Activated naive CD4-positive, alpha-beta T cell treated with anti-CD3 and anti-CD28 coated beads for 36 hours (primary cell): ENCODE measurements at regions of chrX and their contacts with region 1.

Region 1: GRCh38 chrX:39427906-39428305 is 626.6 kb downstream of the MID1IP1 start:
- DNase-seq: peak; percentile 71
- H3K4me3 Mint-ChIP-seq: no peak overlapping the region
- H3K27ac Mint-ChIP-seq: peak overlapping the region; percentile 88
- H3K4me1 Mint-ChIP-seq: peaks cover 67% of the 10 kb centered on the region
- H3K27me3 Mint-ChIP-seq: no peaks in the 10 kb centered on the region

Region 2: DNA sequence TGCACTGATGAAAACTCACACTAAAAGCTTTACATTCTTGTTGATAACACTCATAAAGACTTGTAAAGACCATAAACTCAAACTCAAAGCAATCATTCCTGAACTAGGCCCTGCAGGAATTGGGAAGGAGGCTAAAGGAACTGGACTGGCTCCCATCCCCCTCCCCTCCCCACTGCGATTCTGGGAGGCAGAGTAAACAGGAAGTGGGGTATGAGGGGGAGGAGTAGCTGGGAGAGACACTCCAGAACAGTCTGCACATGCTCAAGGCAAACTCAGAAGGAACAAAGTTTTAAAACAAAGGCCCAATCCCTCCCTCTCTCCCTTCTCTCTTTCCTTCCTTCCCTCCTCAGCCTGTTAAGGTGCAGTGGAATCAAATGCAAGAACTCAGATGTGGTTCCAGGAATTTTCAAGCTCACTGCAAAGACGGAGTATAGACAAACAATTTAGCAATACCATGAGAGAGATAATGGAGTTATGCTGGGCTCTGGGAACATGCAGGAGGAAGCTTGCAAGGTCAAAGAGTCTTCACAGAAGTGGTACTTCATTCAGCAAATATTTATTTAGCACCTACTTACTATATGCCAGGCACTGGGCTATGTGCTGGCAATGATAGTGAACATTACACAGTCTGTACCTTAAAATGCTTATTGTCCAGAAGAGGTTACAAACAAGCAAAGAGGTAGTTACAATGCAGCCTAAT is 610.8 kb before region 1 on chrX:
- CTCF ChIA-PET with region 1: no interaction called
- intact Hi-C with region 1: loop called (anchors 5 kb)
- DNase-seq: no peak
- H3K4me3 Mint-ChIP-seq: no peak overlapping the region
- H3K27ac Mint-ChIP-seq: no peak overlapping the region
- H3K4me1 Mint-ChIP-seq: peaks cover 7% of the 10 kb centered on the region
- H3K27me3 Mint-ChIP-seq: no peaks in the 10 kb centered on the region

Region 3: DNA sequence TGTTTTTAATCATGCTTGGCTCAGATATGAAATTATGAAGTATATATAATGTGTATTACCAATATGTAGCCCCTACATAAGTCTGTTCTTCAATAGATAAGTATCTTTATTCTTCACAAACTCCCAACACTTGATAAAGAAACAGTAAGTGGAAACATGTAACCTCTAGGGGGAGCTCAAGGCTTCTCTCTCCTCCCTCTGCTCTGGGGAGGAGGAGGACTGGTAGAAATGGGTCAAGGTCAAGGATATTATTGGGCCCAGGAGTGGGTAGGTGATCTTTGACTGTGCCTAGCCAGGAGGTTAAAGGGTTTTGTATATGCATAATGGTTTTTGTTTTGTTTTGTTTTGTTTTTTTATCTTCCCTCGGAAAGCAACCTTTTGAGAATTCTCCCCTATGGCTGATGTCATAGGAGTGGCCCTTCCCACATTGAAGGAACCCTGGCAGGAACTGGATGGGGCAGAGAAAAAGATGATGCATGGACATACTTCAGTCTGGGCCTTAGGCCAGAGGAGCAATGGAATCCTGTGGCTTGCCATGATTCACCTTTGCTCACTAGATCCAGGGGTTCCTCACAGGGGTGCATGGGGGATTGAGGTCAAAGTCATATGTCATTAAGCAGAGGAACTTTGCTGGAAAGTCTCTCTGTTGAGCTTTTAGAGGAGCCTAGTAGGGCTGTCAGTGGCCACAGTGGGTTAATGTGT is 166.3 kb before region 1 on chrX:
- CTCF ChIA-PET with region 1: no interaction called
- intact Hi-C with region 1: loop called (anchors 2 kb)
- DNase-seq: peak; percentile 40
- H3K4me3 Mint-ChIP-seq: no peak overlapping the region
- H3K27ac Mint-ChIP-seq: peak overlapping the region; percentile 78
- H3K4me1 Mint-ChIP-seq: peaks cover 49% of the 10 kb centered on the region
- H3K27me3 Mint-ChIP-seq: no peaks in the 10 kb centered on the region

Region 4: GRCh38 chrX:39331082-39331704 is 96.7 kb before region 1 on chrX:
- CTCF ChIA-PET with region 1: no interaction called
- intact Hi-C with region 1: loop called (anchors 1 kb)
- DNase-seq: peak; percentile 61
- H3K4me3 Mint-ChIP-seq: no peak overlapping the region
- H3K27ac Mint-ChIP-seq: peak overlapping the region; percentile 82
- H3K4me1 Mint-ChIP-seq: peaks cover 74% of the 10 kb centered on the region
- H3K27me3 Mint-ChIP-seq: no peaks in the 10 kb centered on the region

Region 5: GRCh38 chrX:39439906-39440798 is 12.2 kb after region 1 on chrX:
- CTCF ChIA-PET with region 1: interaction called, 3 read pairs
- intact Hi-C with region 1: loop called (anchors 1 kb)
- DNase-seq: peak; percentile 44
- H3K4me3 Mint-ChIP-seq: peak overlapping the region; percentile 42
- H3K27ac Mint-ChIP-seq: peak overlapping the region; percentile 86
- H3K4me1 Mint-ChIP-seq: peaks cover 29% of the 10 kb centered on the region
- H3K27me3 Mint-ChIP-seq: no peaks in the 10 kb centered on the region

Region 6: DNA sequence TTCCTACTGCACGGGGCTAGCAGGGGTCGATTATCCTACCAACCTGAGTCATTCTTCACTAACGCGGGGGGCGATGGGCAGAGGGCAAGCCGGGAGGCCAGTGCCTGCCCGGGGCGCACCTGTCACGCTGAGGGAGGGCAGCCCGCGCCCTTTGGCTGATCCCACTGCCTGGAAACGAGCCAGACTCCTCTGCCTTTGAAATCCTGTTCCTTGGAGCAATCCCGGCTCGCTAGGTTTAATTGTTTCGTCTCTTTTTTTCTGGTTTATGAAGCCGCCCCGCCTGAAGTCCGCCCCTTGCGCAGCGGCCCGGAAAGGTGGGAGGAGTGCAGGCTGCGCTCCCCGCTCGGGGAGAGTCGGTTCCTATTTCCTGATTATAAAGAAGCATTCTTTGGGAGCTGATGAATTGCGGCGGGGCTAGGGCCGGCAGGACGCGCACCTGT is 185.6 kb after region 1 on chrX:
- CTCF ChIA-PET with region 1: no interaction called
- intact Hi-C with region 1: loop called (anchors 5 kb)
- DNase-seq: peak; percentile 29
- H3K4me3 Mint-ChIP-seq: peak overlapping the region; percentile 70
- H3K27ac Mint-ChIP-seq: peak overlapping the region; percentile 87
- H3K4me1 Mint-ChIP-seq: peaks cover 22% of the 10 kb centered on the region
- H3K27me3 Mint-ChIP-seq: no peaks in the 10 kb centered on the region